ENCODE measurements at regions of chr20 and their contacts with region 1.

Region 1: GRCh38 chr20:45362804-45363610 is at the start of gene SYS1:
- DNase-seq: peak; percentile 94
- ATAC-seq: peak; percentile 84
- H3K4me3 Mint-ChIP-seq: peak within 1 kb of the TSS; percentile 100
- H3K27ac Mint-ChIP-seq: peak within 1 kb of the TSS; percentile 99
- H3K4me1 Mint-ChIP-seq: peaks cover 53% of the 10 kb centered on the region
- H3K27me3 Mint-ChIP-seq: no peaks in the 10 kb centered on the region
- CTCF ChIP-seq: peak; percentile 69
- total RNA-seq, gene SYS1: 31.7 and 35.2 TPM in 2 replicates

Region 2: GRCh38 chr20:45373353-45374100 is 10.5 kb after region 1 on chr20:
- CTCF ChIA-PET with region 1: interaction called, 75 read pairs
- POLR2A ChIA-PET with region 1: interaction called, 46 read pairs
- intact Hi-C with region 1: loop called (anchors 1 kb)
- DNase-seq: peak; percentile 76
- ATAC-seq: peak; percentile 94
- H3K4me3 Mint-ChIP-seq: peak overlapping the region; percentile 86
- H3K27ac Mint-ChIP-seq: peak overlapping the region; percentile 76
- H3K4me1 Mint-ChIP-seq: peaks cover 56% of the 10 kb centered on the region
- H3K27me3 Mint-ChIP-seq: no peaks in the 10 kb centered on the region
- CTCF ChIP-seq: no peak

Region 3: DNA sequence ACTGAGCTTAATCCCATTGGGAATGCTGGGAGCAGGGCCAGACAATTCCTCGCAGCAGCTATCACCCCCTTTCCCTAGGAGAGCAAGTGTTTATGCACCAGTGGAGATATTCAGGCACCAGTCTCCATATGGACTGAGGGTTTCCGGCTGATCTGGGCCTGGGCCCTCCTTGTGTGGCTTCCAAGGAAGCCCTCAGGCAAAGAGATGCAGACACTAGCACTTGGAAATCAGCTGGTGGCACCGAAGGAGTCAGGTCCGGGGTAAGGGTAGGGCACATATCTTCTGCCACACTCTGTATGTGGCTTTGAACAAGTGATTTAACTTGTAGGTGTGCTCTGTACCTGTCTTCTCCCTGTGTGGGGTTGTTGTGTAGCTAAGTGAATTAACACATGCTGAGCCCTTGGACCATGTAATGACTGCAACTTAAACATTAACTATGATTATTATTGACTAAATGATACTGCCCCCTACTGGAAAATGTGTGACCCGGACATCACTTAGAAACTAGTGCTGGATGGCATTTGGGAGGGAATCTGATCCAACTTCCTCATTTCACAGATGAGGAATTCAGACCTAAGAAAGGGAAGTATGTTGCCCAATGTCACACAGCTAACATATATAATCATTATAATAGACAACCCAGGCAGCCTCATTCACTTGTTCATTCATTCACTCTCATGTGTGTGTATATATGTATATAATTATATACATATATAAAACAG is 87.3 kb after region 1 on chr20:
- CTCF ChIA-PET with region 1: interaction called, 16 read pairs
- POLR2A ChIA-PET with region 1: no interaction called
- intact Hi-C with region 1: loop called (anchors 1 kb)
- DNase-seq: no peak
- ATAC-seq: peak; percentile 46
- H3K4me3 Mint-ChIP-seq: no peak overlapping the region
- H3K27ac Mint-ChIP-seq: no peak overlapping the region
- H3K4me1 Mint-ChIP-seq: peaks cover 19% of the 10 kb centered on the region
- H3K27me3 Mint-ChIP-seq: peaks cover 2% of the 10 kb centered on the region
- CTCF ChIP-seq: peak; percentile 56

Region 4: GRCh38 chr20:46349035-46349741 is 986.2 kb after region 1 on chr20:
- CTCF ChIA-PET with region 1: no interaction called
- POLR2A ChIA-PET with region 1: no interaction called
- intact Hi-C with region 1: loop called (anchors 10 kb)
- DNase-seq: peak; percentile 40
- ATAC-seq: no peak
- H3K4me3 Mint-ChIP-seq: no peak overlapping the region
- H3K27ac Mint-ChIP-seq: no peak overlapping the region
- H3K4me1 Mint-ChIP-seq: peaks cover 28% of the 10 kb centered on the region
- H3K27me3 Mint-ChIP-seq: no peaks in the 10 kb centered on the region
- CTCF ChIP-seq: no peak

Region 5: GRCh38 chr20:46592580-46593362 is 1229.8 kb after region 1 on chr20:
- CTCF ChIA-PET with region 1: no interaction called
- POLR2A ChIA-PET with region 1: no interaction called
- intact Hi-C with region 1: no loop called
- DNase-seq: no peak
- ATAC-seq: no peak
- H3K4me3 Mint-ChIP-seq: no peak overlapping the region
- H3K27ac Mint-ChIP-seq: no peak overlapping the region
- H3K4me1 Mint-ChIP-seq: no peaks in the 10 kb centered on the region
- H3K27me3 Mint-ChIP-seq: peaks cover 17% of the 10 kb centered on the region
- CTCF ChIP-seq: no peak